Panc1 (cell line): ENCODE measurements at regions of chr17 and their contacts with region 1.

Region 1: GRCh38 chr17:7774037-7774659 is 56.6 kb downstream of the DNAH2 start:
- DNase-seq: no peak
- ATAC-seq: peak; percentile 69
- H3K4me3 ChIP-seq: no peak overlapping the region
- H3K27ac ChIP-seq: no peak overlapping the region
- H3K4me1 ChIP-seq: no peaks in the 10 kb centered on the region
- H3K27me3 ChIP-seq: no peaks in the 10 kb centered on the region
- CTCF ChIP-seq: no peak

Region 2: GRCh38 chr17:7035591-7036368 is 738.4 kb before region 1 on chr17 and contains the start of gene SLC16A13:
- CTCF ChIA-PET with region 1: no interaction called
- POLR2A ChIA-PET with region 1: no interaction called
- in situ Hi-C with region 1: no loop called
- intact Hi-C with region 1: no loop called
- DNase-seq: peak; percentile 88
- ATAC-seq: peak; percentile 97
- H3K4me3 ChIP-seq: peak within 1 kb of the TSS; percentile 61 to 87
- H3K27ac ChIP-seq: peak within 1 kb of the TSS; percentile 97
- H3K4me1 ChIP-seq: peaks cover 6% of the 10 kb centered on the region; the same call in 1 of the 2 replicates
- H3K27me3 ChIP-seq: no peaks in the 10 kb centered on the region
- CTCF ChIP-seq: no peak
- total RNA-seq, gene SLC16A13: 13.1 TPM

Region 3: GRCh38 chr17:7794075-7794663 is 20.0 kb after region 1 on chr17:
- CTCF ChIA-PET with region 1: interaction called, 11 read pairs
- POLR2A ChIA-PET with region 1: no interaction called
- in situ Hi-C with region 1: no loop called
- intact Hi-C with region 1: no loop called
- DNase-seq: no peak
- ATAC-seq: no peak
- H3K4me3 ChIP-seq: no peak overlapping the region
- H3K27ac ChIP-seq: no peak overlapping the region
- H3K4me1 ChIP-seq: no peaks in the 10 kb centered on the region
- H3K27me3 ChIP-seq: no peaks in the 10 kb centered on the region
- CTCF ChIP-seq: no peak